PC-9 (cell line): ENCODE measurements at regions of chr12 and their contacts with region 1.

Region 1: GRCh38 chr12:104427011-104427461 is 29.7 kb upstream of the CHST11 start:
- DNase-seq: peak; percentile 25 to 99
- H3K4me3 ChIP-seq: no peak overlapping the region
- H3K27ac ChIP-seq: 0 out of 2 replicates have a peak overlapping the region, but pooled peaks have one; percentile 16
- H3K4me1 ChIP-seq: peaks cover 46% of the 10 kb centered on the region
- H3K27me3 ChIP-seq: no peaks in the 10 kb centered on the region
- CTCF ChIP-seq: no peak

Region 2: DNA sequence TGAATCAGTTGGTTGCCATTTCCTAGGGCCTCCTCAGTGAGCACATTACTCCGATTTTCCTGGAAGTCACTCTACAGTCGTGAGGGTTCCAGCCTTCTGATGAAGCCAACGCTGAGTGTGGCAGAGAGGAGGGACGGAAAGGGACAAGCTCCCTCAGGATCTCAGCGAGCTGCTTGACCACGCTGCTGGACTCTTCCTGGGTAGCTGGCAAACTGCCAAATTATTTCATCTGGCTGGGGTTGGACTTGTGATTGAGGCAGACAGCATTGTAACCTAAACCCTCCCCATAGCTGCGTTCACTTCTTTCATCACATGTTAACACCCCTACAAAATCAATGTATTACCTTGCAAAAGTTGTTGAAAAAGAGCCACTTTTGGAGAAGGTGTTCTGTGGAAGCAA is 39.8 kb before region 1 on chr12:
- CTCF ChIA-PET with region 1: no interaction called
- POLR2A ChIA-PET with region 1: interaction called, 22 read pairs
- intact Hi-C with region 1: no loop called
- DNase-seq: peak in 1 of 2 experiments; percentile 32
- H3K4me3 ChIP-seq: no peak overlapping the region
- H3K27ac ChIP-seq: no peak overlapping the region
- H3K4me1 ChIP-seq: peaks cover 10% of the 10 kb centered on the region; the same call in 1 of the 2 replicates
- H3K27me3 ChIP-seq: no peaks in the 10 kb centered on the region
- CTCF ChIP-seq: no peak

Region 3: DNA sequence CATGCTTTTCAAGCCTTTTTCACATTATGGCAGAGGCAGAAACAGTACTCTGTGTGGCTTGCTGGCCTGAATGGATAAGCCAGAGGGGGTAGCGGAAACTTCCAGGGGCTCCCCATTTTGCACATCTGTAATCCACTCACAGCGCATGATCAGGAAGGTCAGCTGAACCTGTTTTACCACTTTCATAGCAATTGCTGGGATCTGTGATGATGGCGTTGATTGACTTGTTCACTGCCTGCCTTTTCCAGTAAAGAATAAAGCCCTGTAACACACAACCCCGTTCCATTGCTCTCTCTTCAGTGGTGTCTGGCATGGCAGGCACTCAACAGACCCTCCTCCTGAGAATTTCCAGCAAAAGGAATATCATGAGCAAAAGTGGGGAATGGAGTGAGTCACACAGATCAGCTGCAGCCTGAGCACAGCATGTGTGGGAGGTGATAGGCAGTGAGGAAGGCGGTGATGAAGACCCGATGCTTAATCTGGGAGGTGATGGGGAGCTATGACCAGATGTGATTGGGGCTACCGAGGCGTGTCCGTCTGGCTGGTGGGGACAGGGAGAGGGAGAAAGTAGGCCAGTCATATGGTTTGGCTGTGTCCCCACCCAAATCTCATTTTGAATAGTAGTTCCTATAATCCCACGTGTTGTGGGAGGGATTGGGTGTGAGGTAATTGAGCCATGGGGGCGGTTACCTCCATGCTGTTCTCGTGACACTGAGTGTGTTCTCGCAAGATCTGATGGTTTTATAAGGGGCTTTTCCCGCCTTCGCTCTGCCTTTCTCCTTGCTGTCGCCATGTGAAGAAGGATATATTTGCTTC is 15.0 kb before region 1 on chr12:
- CTCF ChIA-PET with region 1: no interaction called
- POLR2A ChIA-PET with region 1: interaction called, 19 read pairs
- intact Hi-C with region 1: no loop called
- DNase-seq: peak; percentile 9 to 42
- H3K4me3 ChIP-seq: no peak overlapping the region
- H3K27ac ChIP-seq: no peak overlapping the region
- H3K4me1 ChIP-seq: peaks cover 98% of the 10 kb centered on the region
- H3K27me3 ChIP-seq: no peaks in the 10 kb centered on the region
- CTCF ChIP-seq: no peak

Region 4: DNA sequence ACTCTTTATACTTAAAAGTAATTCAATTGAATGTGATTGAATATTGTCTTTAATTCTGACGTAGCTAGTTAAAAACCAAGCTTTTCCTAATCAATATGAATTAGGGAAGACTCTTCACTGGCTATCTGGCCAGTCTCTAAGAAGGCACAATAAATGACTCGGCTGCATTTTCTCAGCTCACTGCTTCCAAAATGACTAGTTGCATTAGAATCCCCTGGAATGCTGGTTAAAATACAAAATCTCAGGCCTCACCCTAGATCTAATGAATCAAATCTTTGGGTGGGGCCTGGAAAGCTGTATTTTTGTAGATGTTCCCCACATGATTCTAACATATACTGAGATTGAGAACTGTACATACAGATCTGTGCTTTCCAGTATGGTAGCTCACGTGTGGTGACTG is 271.8 kb after region 1 on chr12:
- CTCF ChIA-PET with region 1: interaction called, 15 read pairs
- POLR2A ChIA-PET with region 1: no interaction called
- intact Hi-C with region 1: no loop called
- DNase-seq: no peak
- H3K4me3 ChIP-seq: no peak overlapping the region
- H3K27ac ChIP-seq: no peak overlapping the region
- H3K4me1 ChIP-seq: no peaks in the 10 kb centered on the region
- H3K27me3 ChIP-seq: no peaks in the 10 kb centered on the region
- CTCF ChIP-seq: no peak